IMR-90 (cell line): ENCODE measurements at regions of chr1 and their contacts with region 1.

Region 1: GRCh38 chr1:21232044-21232443 is 55.3 kb upstream of the EIF4G3 start:
- DNase-seq: peak; percentile 66
- ATAC-seq: peak; percentile 86
- H3K4me3 ChIP-seq: no peak overlapping the region
- H3K27ac ChIP-seq: no peak overlapping the region
- H3K4me1 ChIP-seq: peaks cover 3% of the 10 kb centered on the region; the same call in 1 of the 2 replicates
- H3K27me3 ChIP-seq: no peaks in the 10 kb centered on the region
- CTCF ChIP-seq: peak; percentile 74
- POLR2A ChIP-seq: no peak
- RAD21 ChIP-seq: peak; percentile 88

Region 2: DNA sequence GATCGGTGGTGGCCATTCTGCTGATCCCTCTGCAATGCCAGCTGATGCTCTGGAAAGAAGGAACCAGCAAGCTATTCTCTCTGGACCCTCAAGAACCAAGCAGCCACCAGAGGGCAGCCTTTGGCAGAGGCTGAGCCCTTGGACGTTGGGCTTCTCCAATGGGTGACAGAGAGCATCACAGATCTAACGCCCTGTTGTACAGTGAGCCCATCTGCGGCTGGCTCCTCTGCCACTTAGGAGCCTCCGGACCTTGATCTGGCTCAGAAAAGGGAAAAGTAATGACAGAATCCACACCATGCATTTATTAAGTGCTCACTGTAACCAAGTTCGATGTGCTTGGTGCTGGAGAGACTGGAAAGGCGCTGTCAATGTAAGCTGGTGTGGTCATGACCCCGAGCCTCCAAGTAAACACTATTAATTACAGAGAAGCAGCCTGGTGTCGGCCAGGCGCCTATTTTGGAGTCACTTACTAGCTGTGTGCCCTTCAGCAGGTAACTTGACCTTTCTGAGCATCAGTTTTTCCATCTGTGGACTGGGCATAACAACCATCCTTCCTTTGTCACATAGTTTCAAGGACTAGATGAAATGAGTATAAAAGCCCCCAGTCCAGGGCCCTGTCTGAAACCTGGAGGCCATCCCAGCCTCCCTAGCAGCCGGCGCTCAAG is 23.4 kb after region 1 on chr1:
- CTCF ChIA-PET with region 1: interaction called, 3 read pairs
- POLR2A ChIA-PET with region 1: no interaction called
- dilution Hi-C with region 1: no loop called
- in situ Hi-C with region 1: no loop called
- intact Hi-C with region 1: loop called (anchors 1 kb)
- DNase-seq: peak; percentile 79
- ATAC-seq: peak; percentile 90
- H3K4me3 ChIP-seq: no peak overlapping the region
- H3K27ac ChIP-seq: no peak overlapping the region
- H3K4me1 ChIP-seq: peaks cover 8% of the 10 kb centered on the region
- H3K27me3 ChIP-seq: no peaks in the 10 kb centered on the region
- CTCF ChIP-seq: peak; percentile 85
- POLR2A ChIP-seq: 0 out of 2 replicates have a peak, but pooled peaks have one; percentile 40
- RAD21 ChIP-seq: peak; percentile 96

Region 3: DNA sequence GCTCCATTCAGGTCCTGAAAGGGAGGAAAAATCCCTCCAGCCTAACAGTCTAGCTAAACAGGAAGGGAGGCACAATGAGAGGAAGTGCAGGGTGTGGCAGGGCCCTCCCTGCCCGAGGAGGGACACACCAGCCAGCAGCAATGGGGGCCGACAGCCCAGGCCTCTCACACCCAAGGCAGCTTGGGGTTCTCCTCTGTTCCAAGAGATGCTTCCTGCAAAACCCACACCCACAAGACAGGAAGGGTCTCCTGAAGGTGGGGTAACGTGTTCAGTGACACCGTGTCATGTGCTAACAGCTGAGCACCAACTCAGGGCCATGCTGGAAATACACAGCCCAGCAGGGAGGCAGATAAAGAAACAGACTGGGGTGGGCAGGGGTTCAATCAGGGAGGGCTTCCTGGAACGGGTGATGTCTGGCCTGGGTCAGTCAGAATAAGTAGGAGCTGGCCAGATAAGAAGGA is 48.0 kb after region 1 on chr1:
- CTCF ChIA-PET with region 1: no interaction called
- POLR2A ChIA-PET with region 1: no interaction called
- dilution Hi-C with region 1: no loop called
- in situ Hi-C with region 1: no loop called
- intact Hi-C with region 1: no loop called
- DNase-seq: no peak
- ATAC-seq: peak; percentile 59
- H3K4me3 ChIP-seq: no peak overlapping the region
- H3K27ac ChIP-seq: peak overlapping the region; percentile 59
- H3K4me1 ChIP-seq: peaks cover 26% of the 10 kb centered on the region
- H3K27me3 ChIP-seq: no peaks in the 10 kb centered on the region
- CTCF ChIP-seq: no peak
- POLR2A ChIP-seq: no peak
- RAD21 ChIP-seq: no peak

Region 4: GRCh38 chr1:21586846-21587601 is 355.0 kb after region 1 on chr1:
- CTCF ChIA-PET with region 1: no interaction called
- POLR2A ChIA-PET with region 1: no interaction called
- dilution Hi-C with region 1: no loop called
- in situ Hi-C with region 1: loop called (anchors 5 kb)
- intact Hi-C with region 1: no loop called
- DNase-seq: peak; percentile 91
- ATAC-seq: peak; percentile 92
- H3K4me3 ChIP-seq: no peak overlapping the region
- H3K27ac ChIP-seq: no peak overlapping the region; the same call in 1 of the 2 replicates
- H3K4me1 ChIP-seq: peaks cover 7% of the 10 kb centered on the region
- H3K27me3 ChIP-seq: peaks cover 16% of the 10 kb centered on the region; the same call in 1 of the 2 replicates
- CTCF ChIP-seq: no peak; the same call in 1 of the 2 replicates
- POLR2A ChIP-seq: 0 out of 2 replicates have a peak, but pooled peaks have one; percentile 22
- RAD21 ChIP-seq: peak; percentile 28; the same call in 1 of the 2 replicates

Region 5: GRCh38 chr1:21773585-21773984 is 541.5 kb after region 1 on chr1:
- CTCF ChIA-PET with region 1: no interaction called
- POLR2A ChIA-PET with region 1: no interaction called
- dilution Hi-C with region 1: no loop called
- in situ Hi-C with region 1: no loop called
- intact Hi-C with region 1: no loop called
- DNase-seq: no peak
- ATAC-seq: no peak
- H3K4me3 ChIP-seq: no peak overlapping the region
- H3K27ac ChIP-seq: no peak overlapping the region
- H3K4me1 ChIP-seq: peaks cover 10% of the 10 kb centered on the region
- H3K27me3 ChIP-seq: no peaks in the 10 kb centered on the region
- CTCF ChIP-seq: no peak
- POLR2A ChIP-seq: no peak
- RAD21 ChIP-seq: no peak